ENCODE measurements at regions of chr10 and their contacts with region 1.

Region 1: DNA sequence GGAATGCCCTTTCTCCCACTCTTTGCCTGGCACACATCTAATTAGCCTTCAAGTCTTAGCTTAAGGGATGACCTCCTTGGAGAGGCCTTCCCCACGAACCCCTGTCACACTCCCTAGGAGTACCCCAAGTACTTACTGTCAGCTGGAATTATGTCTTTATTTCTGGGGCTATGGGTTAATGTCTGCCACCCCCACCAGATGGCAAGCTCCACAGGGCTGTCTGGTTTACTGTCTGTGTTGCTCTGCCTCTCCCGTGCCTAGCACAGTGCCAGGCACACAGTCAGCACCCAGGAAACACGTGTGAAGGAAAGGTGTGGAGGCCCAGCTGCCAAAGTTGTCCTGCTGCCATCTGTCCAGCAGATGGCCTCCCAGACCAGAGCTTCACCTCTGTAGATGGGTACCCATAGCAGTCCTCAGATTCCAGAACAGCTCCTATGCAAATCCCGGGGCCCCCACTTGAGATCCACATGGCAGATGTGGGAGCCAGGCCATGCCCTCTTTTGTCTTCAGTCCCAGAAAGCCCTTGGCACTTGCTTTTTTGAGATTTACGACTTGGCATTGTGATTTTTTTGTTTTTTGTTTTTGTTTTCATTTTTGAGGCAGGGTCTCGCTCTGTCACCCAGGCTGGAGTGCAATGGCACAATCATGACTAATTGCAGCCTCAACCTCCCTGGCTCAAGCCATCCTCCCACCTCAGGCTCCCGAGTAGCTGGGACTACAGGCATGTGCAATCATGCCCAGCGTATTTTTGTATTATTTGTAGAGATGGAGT is 17.2 kb upstream of the PALD1 start:
- DNase-seq: peak; percentile 67
- ATAC-seq: peak; percentile 66
- H3K4me3 Mint-ChIP-seq: no peak overlapping the region
- H3K27ac Mint-ChIP-seq: no peak overlapping the region
- H3K4me1 Mint-ChIP-seq: no peaks in the 10 kb centered on the region
- H3K27me3 Mint-ChIP-seq: peaks cover 40% of the 10 kb centered on the region

Region 2: GRCh38 chr10:70221030-70221429 is 240.4 kb before region 1 on chr10:
- CTCF ChIA-PET with region 1: interaction called, 14 read pairs
- POLR2A ChIA-PET with region 1: no interaction called
- DNase-seq: no peak
- ATAC-seq: no peak
- H3K4me3 Mint-ChIP-seq: no peak overlapping the region
- H3K27ac Mint-ChIP-seq: no peak overlapping the region
- H3K4me1 Mint-ChIP-seq: peaks cover 21% of the 10 kb centered on the region
- H3K27me3 Mint-ChIP-seq: no peaks in the 10 kb centered on the region

Region 3: GRCh38 chr10:70493660-70494234 is 32.3 kb after region 1 on chr10:
- CTCF ChIA-PET with region 1: interaction called, 14 read pairs
- POLR2A ChIA-PET with region 1: no interaction called
- DNase-seq: peak; percentile 68
- ATAC-seq: peak; percentile 40
- H3K4me3 Mint-ChIP-seq: peak overlapping the region; percentile 23
- H3K27ac Mint-ChIP-seq: peak overlapping the region; percentile 83
- H3K4me1 Mint-ChIP-seq: peaks cover 51% of the 10 kb centered on the region
- H3K27me3 Mint-ChIP-seq: no peaks in the 10 kb centered on the region

Region 4: GRCh38 chr10:70532554-70533188 is 71.3 kb after region 1 on chr10:
- CTCF ChIA-PET with region 1: interaction called, 36 read pairs
- POLR2A ChIA-PET with region 1: no interaction called
- DNase-seq: no peak
- ATAC-seq: no peak
- H3K4me3 Mint-ChIP-seq: no peak overlapping the region
- H3K27ac Mint-ChIP-seq: peak overlapping the region; percentile 2
- H3K4me1 Mint-ChIP-seq: peaks cover 7% of the 10 kb centered on the region
- H3K27me3 Mint-ChIP-seq: no peaks in the 10 kb centered on the region

Region 5: GRCh38 chr10:70549962-70550458 is 88.6 kb after region 1 on chr10:
- CTCF ChIA-PET with region 1: interaction called, 14 read pairs
- POLR2A ChIA-PET with region 1: no interaction called
- DNase-seq: peak; percentile 83
- ATAC-seq: peak; percentile 88
- H3K4me3 Mint-ChIP-seq: no peak overlapping the region
- H3K27ac Mint-ChIP-seq: peak overlapping the region; percentile 49
- H3K4me1 Mint-ChIP-seq: peaks cover 2% of the 10 kb centered on the region
- H3K27me3 Mint-ChIP-seq: no peaks in the 10 kb centered on the region

Measured in activated CD8-positive, alpha-beta T cell treated with anti-CD3 and anti-CD28 coated beads, Interleukin-2, amount 10 ng/mL, durations not matched to agents 7 days and 5 days (primary cell).